ENCODE measurements at regions of chr11 and their contacts with region 1.

Region 1: GRCh38 chr11:10208131-10208575 is 85.9 kb downstream of the SBF2 start:
- DNase-seq: no peak
- ATAC-seq: peak; percentile 41

Region 2: DNA sequence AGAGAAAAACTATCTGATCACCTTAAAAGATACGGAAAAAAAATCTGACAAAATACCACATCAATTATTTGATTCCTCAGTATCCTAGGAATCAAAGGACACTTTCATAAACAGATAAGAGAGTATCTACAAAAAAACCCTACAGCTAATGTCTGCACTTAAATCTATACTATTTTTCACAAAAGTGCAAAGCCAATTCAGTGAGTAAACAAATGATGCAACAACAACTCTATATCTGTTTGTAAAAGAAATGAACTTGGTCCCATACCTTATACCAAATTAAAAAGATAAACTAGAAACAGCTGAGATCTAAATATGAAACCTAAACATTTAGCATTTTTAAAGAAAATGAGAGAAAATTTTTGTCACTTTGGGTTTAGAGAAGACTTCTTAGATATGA is 280.5 kb before region 1 on chr11:
- intact Hi-C with region 1: no loop called
- DNase-seq: no peak
- ATAC-seq: no peak

Region 3: GRCh38 chr11:10307442-10308207 is 99.5 kb after region 1 on chr11:
- intact Hi-C with region 1: loop called (anchors 5 to 10 kb)
- DNase-seq: peak; percentile 86
- ATAC-seq: peak; percentile 60 to 68

Region 4: GRCh38 chr11:10387206-10388083 is 179.3 kb after region 1 on chr11:
- intact Hi-C with region 1: no loop called
- DNase-seq: peak; percentile 58
- ATAC-seq: peak; percentile 58 to 73